Mammary epithelial cell (primary cell): ENCODE measurements at regions of chr11 and their contacts with region 1.

Region 1: DNA sequence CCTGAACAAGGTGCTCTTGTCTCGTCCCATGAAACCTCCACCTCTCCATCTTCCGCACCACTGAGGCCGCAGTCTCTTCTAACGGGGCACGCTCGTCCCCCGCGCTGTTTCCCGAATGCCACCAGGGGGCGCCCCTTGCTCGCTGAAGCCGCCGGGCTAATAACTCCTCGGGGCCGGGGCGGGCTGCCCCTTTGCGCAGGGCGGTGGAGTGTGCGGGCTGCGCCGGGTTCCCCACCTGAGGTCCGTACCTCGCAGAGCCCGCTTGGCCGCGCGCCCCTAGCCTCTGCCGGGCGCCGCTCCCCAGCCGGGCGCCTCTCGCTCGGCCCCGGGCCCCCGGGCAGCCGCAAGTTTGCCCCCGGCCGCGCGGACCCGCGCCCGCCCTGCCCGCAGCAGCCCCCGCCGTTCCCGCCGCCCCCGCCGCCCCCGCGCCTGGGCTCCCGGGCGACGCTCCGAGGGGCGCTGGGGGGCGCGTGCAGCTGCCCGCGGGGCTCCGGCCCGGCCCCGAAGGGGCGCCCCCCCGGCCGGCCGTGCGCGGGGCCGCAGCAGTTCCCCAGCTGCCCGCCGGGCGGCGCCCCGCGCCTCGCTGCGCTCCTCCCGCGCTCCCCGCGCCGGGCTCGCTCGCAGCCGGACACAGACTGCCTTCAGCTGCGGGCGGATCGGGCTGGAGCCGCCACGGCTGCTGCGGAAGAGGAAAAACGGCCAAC is at the start of gene GRIK4:
- DNase-seq: peak; percentile 62
- H3K4me3 ChIP-seq: peak within 1 kb of the TSS in 2 of 3 experiments; percentile 40 to 42
- H3K27ac ChIP-seq: no peak within 1 kb of the TSS
- H3K4me1 ChIP-seq: no peaks in the 10 kb centered on the region
- H3K27me3 ChIP-seq: peaks cover 6% of the 10 kb centered on the region
- CTCF ChIP-seq: peak; percentile 67 to 95
- total RNA-seq, gene GRIK4: not detected

Region 2: DNA sequence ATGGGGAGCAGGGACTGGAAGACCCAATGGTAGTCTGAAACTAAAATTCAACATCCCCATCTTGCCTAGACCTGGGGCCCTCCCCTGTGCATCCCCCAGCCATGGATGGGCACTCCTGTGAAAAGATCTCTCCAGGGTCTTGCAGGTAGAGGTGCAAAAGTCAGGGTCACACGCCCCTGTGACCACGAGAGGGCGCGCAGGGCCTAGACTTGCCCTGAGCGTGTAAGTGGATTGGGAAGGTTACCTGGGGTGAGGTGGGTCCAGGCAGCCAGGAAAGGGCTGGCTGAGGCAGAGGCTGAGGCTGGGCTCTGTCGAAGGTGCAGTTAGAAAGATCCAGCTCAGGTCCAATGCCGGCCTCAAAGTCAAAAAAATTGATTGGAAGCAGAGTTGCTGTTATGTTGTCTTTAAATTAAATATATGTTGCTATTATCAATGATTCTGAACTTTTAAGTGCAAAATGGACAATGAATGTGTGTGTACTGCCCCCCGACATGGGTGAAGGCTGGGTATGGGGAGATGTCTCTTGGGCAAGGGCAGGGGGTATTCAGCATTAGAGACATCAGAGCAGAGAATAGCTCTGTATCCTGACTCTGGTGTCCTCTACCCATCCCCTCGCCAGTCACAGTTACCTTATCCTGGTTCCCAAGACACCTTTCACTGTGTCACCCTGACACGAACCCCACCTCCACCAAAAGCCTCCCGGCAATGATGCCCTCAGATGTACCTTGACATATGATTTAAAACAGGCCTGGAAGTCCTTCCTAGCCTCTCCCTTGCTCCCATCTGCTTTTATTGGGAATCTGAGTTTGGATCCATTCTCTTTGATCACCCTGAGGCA is 276.0 kb before region 1 on chr11:
- CTCF ChIA-PET with region 1: no interaction called
- dilution Hi-C with region 1: no loop called
- in situ Hi-C with region 1: no loop called
- intact Hi-C with region 1: loop called (anchors 5 kb)
- DNase-seq: peak; percentile 62
- H3K4me3 ChIP-seq: no peak overlapping the region
- H3K27ac ChIP-seq: no peak overlapping the region
- H3K4me1 ChIP-seq: peaks cover 19% of the 10 kb centered on the region
- H3K27me3 ChIP-seq: peaks cover 5% of the 10 kb centered on the region
- CTCF ChIP-seq: peak; percentile 88 to 97

Region 3: DNA sequence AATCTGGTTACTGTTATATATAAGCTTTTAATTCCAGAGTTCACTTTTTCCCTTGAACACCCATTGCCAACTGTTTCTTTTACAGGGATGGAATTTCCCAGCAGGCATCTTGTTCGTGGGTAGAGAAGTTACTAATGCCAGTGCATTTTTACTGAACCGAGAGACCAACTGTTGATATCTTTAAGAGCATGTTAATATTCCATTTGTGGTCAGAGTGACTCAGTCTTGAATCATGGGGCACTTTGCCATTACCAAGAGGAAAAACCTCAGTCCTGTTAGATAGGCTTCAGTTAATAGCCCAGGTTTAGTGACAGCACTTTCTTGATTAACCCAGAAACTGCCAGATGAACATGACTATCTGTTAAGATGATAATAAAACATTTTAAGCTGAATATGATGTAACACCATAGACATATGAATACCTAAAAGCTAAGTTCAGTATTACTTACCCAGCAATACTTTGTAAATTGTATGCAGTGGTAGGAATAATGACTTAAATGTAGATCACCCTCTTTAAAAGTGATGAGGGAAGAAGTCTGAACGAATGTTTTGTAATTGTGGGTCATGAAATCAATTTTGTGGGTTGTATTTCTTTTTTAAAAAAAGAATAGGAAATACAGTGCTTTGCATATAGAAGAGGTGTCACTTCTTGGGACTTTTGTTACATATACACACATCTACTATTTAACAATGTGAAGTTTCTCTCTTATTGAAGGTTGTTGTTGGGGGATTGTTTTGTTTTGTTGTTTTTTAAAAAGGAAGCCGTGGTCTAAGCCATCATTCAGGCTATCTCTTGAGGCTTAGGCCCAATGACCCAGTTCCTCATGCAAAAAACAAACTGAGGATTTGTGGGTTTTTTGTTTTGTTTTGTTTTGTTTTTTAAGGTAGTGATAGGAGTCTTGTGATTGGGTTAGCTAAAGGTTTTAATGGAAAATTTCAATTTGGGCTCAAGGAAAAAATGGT is 78.9 kb before region 1 on chr11:
- CTCF ChIA-PET with region 1: no interaction called
- dilution Hi-C with region 1: loop called (anchors 5 kb)
- in situ Hi-C with region 1: no loop called
- intact Hi-C with region 1: no loop called
- DNase-seq: peak; percentile 97
- H3K4me3 ChIP-seq: no peak overlapping the region
- H3K27ac ChIP-seq: peak overlapping the region; percentile 71
- H3K4me1 ChIP-seq: peaks cover 12% of the 10 kb centered on the region
- H3K27me3 ChIP-seq: no peaks in the 10 kb centered on the region
- CTCF ChIP-seq: no peak

Region 4: DNA sequence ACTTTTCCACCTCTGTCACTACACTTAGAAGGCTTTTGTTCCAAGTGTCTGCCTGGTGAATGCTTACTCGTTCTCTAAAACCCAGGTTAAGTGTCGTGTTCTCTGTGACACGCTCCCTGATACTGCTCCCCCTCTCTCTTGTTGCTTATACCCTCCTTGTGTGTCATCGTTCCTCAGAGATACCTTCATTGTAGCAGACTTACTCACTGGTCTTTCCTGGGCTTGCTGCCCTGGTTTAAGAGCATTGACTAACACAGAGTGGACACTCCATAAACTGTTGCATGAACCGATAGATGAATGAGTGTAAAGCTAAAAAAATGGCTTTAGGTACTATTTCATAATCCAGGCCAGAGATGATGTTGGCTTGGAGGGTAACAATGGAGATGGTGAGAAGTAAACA is 171.6 kb after region 1 on chr11:
- CTCF ChIA-PET with region 1: interaction called, 3 read pairs
- dilution Hi-C with region 1: loop called (anchors 25 kb)
- in situ Hi-C with region 1: loop called (anchors 5 kb)
- intact Hi-C with region 1: loop called (anchors 1 kb)
- DNase-seq: peak; percentile 7
- H3K4me3 ChIP-seq: no peak overlapping the region
- H3K27ac ChIP-seq: no peak overlapping the region
- H3K4me1 ChIP-seq: no peaks in the 10 kb centered on the region
- H3K27me3 ChIP-seq: no peaks in the 10 kb centered on the region
- CTCF ChIP-seq: no peak

Region 5: DNA sequence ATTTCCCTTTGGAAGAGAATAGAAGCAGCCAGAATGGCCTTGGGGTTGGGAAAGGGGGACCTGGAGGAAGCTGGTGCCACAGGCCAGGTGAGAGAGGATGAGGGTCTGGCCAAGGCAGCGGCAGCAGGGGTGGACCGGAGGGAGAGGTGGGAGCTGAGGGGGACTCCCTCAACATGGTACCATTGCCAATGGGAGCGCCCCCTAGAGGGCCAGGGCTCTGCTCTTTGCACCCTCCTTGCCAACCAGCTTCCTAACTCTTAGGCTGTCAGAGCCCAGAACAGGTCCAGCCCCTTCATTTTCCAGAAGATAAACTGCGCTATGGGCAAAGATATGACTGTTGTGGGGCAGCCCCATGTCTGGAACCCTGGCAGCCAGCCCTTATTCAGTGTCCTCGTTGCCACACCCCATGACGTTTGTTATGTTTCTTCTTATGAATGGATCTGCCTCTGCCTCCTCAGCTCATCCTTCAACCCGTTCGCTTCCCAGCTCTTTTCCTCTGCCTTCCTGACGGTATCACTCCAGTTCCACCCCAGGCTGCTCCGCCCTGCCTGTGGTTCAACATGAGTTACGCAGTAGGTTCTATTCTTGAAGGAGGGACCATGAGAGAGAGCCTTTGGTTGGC is 185.4 kb after region 1 on chr11:
- CTCF ChIA-PET with region 1: no interaction called
- dilution Hi-C with region 1: loop called (anchors 25 kb)
- in situ Hi-C with region 1: no loop called
- intact Hi-C with region 1: no loop called
- DNase-seq: no peak
- H3K4me3 ChIP-seq: no peak overlapping the region
- H3K27ac ChIP-seq: no peak overlapping the region
- H3K4me1 ChIP-seq: no peaks in the 10 kb centered on the region
- H3K27me3 ChIP-seq: no peaks in the 10 kb centered on the region
- CTCF ChIP-seq: peak in 1 of 2 donors; percentile 7

Region 6: DNA sequence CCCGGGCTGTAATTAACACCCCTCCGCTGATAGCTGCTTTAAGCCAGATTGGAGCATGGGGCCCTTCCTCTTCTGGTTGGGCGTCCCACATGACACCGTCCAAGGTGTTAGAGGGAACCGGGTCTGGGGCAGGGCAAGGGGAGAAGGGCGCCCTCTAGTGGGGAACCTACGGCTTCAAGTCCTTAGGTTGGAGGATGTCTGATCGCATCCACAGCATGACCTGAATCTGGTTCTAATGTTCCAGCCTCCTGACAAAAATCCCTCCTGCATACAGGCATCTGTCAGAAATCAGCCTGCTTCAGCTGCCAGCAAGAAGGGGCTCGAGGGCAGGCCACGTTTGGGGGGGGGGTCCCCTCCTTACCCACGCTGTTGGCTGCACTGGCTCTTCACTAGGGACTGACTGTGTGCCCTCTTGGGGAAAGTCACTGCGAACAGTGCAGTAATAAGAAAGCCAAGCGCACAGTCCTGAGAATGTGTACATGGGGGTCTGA is 418.4 kb after region 1 on chr11:
- CTCF ChIA-PET with region 1: interaction called, 5 read pairs
- dilution Hi-C with region 1: no loop called
- in situ Hi-C with region 1: loop called in 1 of 2 experiments (anchors 25 kb)
- intact Hi-C with region 1: loop called (anchors 1 kb)
- DNase-seq: no peak
- H3K4me3 ChIP-seq: no peak overlapping the region
- H3K27ac ChIP-seq: no peak overlapping the region
- H3K4me1 ChIP-seq: no peaks in the 10 kb centered on the region
- H3K27me3 ChIP-seq: no peaks in the 10 kb centered on the region
- CTCF ChIP-seq: peak; percentile 57 to 74

Region 7: GRCh38 chr11:121112498-121113455 is 601.5 kb after region 1 on chr11:
- CTCF ChIA-PET with region 1: no interaction called
- dilution Hi-C with region 1: no loop called
- in situ Hi-C with region 1: loop called in 1 of 2 experiments (anchors 25 kb)
- intact Hi-C with region 1: loop called (anchors 1 kb)
- DNase-seq: peak; percentile 56
- H3K4me3 ChIP-seq: no peak overlapping the region
- H3K27ac ChIP-seq: no peak overlapping the region
- H3K4me1 ChIP-seq: no peaks in the 10 kb centered on the region
- H3K27me3 ChIP-seq: no peaks in the 10 kb centered on the region
- CTCF ChIP-seq: peak; percentile 38 to 57